CD4-positive, alpha-beta T cell (primary cell): ENCODE measurements at regions of chr11 and their contacts with region 1.

Region 1: DNA sequence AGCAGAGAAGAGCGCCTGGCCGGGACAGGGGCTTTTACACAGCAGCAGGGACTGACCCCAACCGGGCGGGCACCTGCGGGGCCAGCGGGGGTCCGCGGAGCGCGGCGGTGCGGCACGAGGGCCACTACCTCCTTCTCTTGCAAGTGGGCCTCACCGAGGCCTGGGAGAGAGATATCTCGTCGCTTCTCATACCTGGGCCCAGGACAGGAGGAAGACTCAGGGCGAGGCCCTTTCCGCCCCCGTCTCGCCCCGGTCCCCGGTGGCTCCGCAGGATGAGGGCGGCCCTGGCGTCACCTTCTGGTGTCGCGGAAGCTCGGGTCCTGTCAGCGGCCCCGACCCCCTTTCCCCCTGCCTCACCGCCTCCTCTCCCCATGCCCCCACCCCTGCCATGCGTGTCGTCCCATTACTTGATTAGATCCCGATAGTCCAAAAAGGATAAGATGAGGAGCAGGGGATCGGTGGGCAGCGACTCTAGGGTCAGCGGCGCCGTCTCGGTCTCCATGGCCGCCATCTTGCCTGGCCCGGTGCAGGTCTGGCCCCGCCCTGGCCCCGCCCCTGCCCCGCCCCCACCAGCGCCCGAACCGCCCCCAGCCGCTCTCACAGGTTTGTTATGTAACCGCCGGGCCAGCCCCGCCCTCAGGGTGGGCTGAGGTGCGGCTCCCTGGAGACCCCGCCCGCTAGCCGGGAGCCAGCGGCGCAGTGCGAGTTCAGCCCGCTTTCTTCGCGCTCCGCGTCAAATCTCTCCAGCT is at the start of gene FBXO3:
- DNase-seq: peak; percentile 78 to 95 (median 86)
- ATAC-seq: peak; percentile 86
- H3K4me3 ChIP-seq: peak within 1 kb of the TSS; percentile 73
- H3K4me3 Mint-ChIP-seq: peak within 1 kb of the TSS; percentile 97
- H3K27ac ChIP-seq: peak within 1 kb of the TSS; percentile 64 to 75
- H3K27ac Mint-ChIP-seq: peak within 1 kb of the TSS; percentile 97
- H3K4me1 ChIP-seq: peaks cover 41% of the 10 kb centered on the region
- H3K4me1 Mint-ChIP-seq: peaks cover 61% of the 10 kb centered on the region
- H3K27me3 ChIP-seq: peaks cover 0 to 7% of the 10 kb centered on the region in 2 experiments
- H3K27me3 Mint-ChIP-seq: peaks cover 8% of the 10 kb centered on the region
- CTCF ChIP-seq: no peak
- total RNA-seq, gene FBXO3: 62.0 to 63.4 TPM

Region 2: GRCh38 chr11:33700425-33701271 is 73.5 kb before region 1 on chr11 and contains the start of gene C11orf91:
- CTCF ChIA-PET with region 1: no interaction called
- POLR2A ChIA-PET with region 1: interaction called, 4 read pairs
- intact Hi-C with region 1: loop called (anchors 2 kb)
- DNase-seq: peak; percentile 84 to 98 (median 94)
- ATAC-seq: peak; percentile 93
- H3K4me3 ChIP-seq: peak within 1 kb of the TSS; percentile 68
- H3K4me3 Mint-ChIP-seq: peak within 1 kb of the TSS; percentile 95
- H3K27ac ChIP-seq: no peak within 1 kb of the TSS
- H3K27ac Mint-ChIP-seq: peak within 1 kb of the TSS; percentile 64
- H3K4me1 ChIP-seq: peaks cover 14% of the 10 kb centered on the region
- H3K4me1 Mint-ChIP-seq: peaks cover 33% of the 10 kb centered on the region
- H3K27me3 ChIP-seq: no peaks in the 10 kb centered on the region
- H3K27me3 Mint-ChIP-seq: peaks cover 10% of the 10 kb centered on the region
- CTCF ChIP-seq: no peak
- total RNA-seq, gene C11orf91: 0.45 TPM in 1 of 2 experiments, not detected in the other

Region 3: GRCh38 chr11:34916015-34916842 is 1142.1 kb after region 1 on chr11 and contains the starts of genes APIP and PDHX:
- CTCF ChIA-PET with region 1: no interaction called
- POLR2A ChIA-PET with region 1: no interaction called
- intact Hi-C with region 1: loop called in 1 of 2 experiments (anchors 10 kb)
- DNase-seq: peak; percentile 91 to 99 (median 95)
- ATAC-seq: peak; percentile 90
- H3K4me3 ChIP-seq: peak within 1 kb of the TSS; percentile 94
- H3K4me3 Mint-ChIP-seq: peak within 1 kb of the TSS; percentile 96
- H3K27ac ChIP-seq: peak within 1 kb of the TSS; percentile 80 to 93
- H3K27ac Mint-ChIP-seq: peak within 1 kb of the TSS; percentile 93
- H3K4me1 ChIP-seq: peaks cover 24% of the 10 kb centered on the region
- H3K4me1 Mint-ChIP-seq: peaks cover 57% of the 10 kb centered on the region
- H3K27me3 ChIP-seq: no peaks in the 10 kb centered on the region
- H3K27me3 Mint-ChIP-seq: no peaks in the 10 kb centered on the region
- CTCF ChIP-seq: no peak
- total RNA-seq, gene APIP: 7.1 to 8.3 TPM
- total RNA-seq, gene PDHX: 17.3 to 17.4 TPM